Heart right ventricle (tissue), 16 donors: ENCODE measurements at regions of chrX and their contacts with region 1.

Region 1: DNA sequence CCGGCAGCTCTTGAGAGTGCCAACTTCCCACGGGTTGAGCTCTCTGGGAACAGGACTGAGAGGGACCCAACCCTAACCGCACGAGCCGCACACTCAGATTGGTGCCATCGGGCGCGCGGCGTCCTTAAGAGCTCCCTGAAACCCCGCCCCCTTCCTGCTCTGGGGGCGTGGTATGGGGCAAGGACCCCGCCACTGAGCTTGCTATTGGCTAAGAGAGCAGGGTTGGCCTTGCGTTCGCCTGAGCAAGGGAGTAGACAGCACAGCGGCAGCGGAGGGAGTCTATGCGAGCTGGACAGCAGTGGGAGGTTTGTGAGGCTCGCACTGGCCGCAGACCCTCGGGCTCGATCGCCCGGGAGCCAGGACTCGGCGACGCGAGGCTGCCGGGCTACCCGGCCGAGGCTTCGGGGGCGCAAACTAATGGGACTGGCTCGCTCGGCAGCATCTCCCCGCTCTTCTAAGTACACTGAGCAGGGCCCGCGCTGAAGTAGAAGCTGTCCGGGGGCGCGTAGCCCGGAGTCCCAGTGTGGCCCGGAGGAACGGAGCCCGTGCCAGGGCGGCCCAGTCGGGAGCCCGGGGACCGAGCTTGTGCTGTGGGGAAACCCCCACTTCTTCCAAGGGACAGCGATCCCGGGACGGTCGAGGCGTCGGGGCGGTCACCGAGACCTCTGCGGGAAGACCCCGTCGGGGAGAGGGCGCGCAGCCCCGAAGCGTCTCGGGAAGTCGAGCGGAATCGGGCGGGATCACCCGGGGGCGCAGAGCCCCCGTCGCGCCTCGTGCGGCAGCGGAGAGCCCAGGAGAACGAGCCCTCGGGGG is at the start of gene EFNB1:
- DNase-seq: peak; percentile 90 to 92
- ATAC-seq: peak; percentile 90 to 97 (median 93)
- H3K4me3 ChIP-seq: peak within 1 kb of the TSS; percentile 47 to 90 (median 84)
- H3K27ac ChIP-seq: peak within 1 kb of the TSS; percentile 50 to 90 (median 87)
- H3K4me1 ChIP-seq: peaks cover 0 to 28% (median 10%) of the 10 kb centered on the region in 9 donors
- H3K27me3 ChIP-seq: peaks cover 0 to 63% (median 0%) of the 10 kb centered on the region in 7 donors
- CTCF ChIP-seq: no peak
- total RNA-seq, gene EFNB1: 10.8 to 45.1 (median 16.5) TPM

Region 2: GRCh38 chrX:68936608-68937007 is 107.7 kb after region 1 on chrX:
- intact Hi-C with region 1: loop called in 3 of 10 experiments (anchors 2 to 5 kb)
- DNase-seq: no peak
- ATAC-seq: peak in 3 of 8 donors; percentile 32 to 53 (median 39)
- H3K4me3 ChIP-seq: no peak overlapping the region
- H3K27ac ChIP-seq: peak overlapping the region in 4 of 10 donors; percentile 26 to 49 (median 42)
- H3K4me1 ChIP-seq: peaks cover 0 to 57% (median 22%) of the 10 kb centered on the region in 9 donors
- H3K27me3 ChIP-seq: no peaks in the 10 kb centered on the region
- CTCF ChIP-seq: no peak

Region 3: GRCh38 chrX:69027181-69028005 is 198.4 kb after region 1 on chrX:
- intact Hi-C with region 1: loop called in 1 of 10 experiments (anchors 10 kb)
- DNase-seq: no peak
- ATAC-seq: peak in 3 of 8 donors; percentile 13 to 53 (median 29)
- H3K4me3 ChIP-seq: no peak overlapping the region
- H3K27ac ChIP-seq: peak overlapping the region in 1 of 10 donors; percentile 29
- H3K4me1 ChIP-seq: peaks cover 0 to 42% (median 19%) of the 10 kb centered on the region in 9 donors
- H3K27me3 ChIP-seq: peaks cover 0 to 20% (median 0%) of the 10 kb centered on the region in 7 donors
- CTCF ChIP-seq: no peak

Region 4: GRCh38 chrX:69207216-69207615 is 378.3 kb after region 1 on chrX:
- intact Hi-C with region 1: loop called in 1 of 10 experiments (anchors 5 kb)
- DNase-seq: no peak
- ATAC-seq: no peak
- H3K4me3 ChIP-seq: no peak overlapping the region
- H3K27ac ChIP-seq: no peak overlapping the region
- H3K4me1 ChIP-seq: peaks cover 0 to 9% (median 0%) of the 10 kb centered on the region in 9 donors
- H3K27me3 ChIP-seq: peaks cover 0 to 10% (median 0%) of the 10 kb centered on the region in 7 donors
- CTCF ChIP-seq: no peak

Region 5: DNA sequence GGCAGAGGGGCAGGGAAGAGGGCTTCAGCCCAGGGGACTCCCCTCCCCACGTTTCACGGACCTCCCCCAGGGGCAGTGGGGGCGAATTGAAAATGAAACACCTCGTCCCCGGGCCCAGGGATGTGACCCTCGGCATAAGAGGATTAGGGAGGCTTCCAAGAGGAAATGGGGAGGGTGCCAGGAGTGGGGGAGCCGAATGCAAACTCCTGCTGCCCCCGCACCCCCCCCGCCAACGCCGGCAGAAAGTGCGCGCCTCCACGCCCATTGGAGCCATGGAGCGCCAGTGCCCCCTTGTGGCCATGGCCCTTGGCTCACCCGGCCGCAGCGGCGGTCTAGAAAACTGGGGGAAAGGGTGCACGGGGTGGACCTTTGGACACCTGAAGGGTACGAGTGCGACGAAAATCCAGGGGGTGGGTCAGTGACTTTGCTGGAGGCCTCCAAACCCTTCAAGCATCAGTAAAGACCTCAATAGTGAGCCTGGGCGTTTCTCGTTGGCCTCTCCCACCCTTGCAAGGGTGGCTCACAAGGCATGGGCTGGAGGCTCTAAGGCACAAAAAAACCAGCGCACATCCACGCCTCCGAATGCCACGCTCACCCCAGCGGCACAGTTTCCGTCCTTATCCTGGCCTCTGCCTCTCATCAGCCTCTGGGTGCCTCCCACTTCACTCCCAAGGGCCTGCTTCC is 457.1 kb after region 1 on chrX:
- intact Hi-C with region 1: loop called in 9 of 10 experiments (anchors 2 to 5 kb)
- DNase-seq: peak; percentile 49 to 71
- ATAC-seq: peak; percentile 72 to 89 (median 86)
- H3K4me3 ChIP-seq: peak overlapping the region; percentile 4 to 55 (median 45)
- H3K27ac ChIP-seq: peak overlapping the region in 3 of 10 donors; percentile 30 to 55 (median 31)
- H3K4me1 ChIP-seq: peaks cover 0 to 10% (median 5%) of the 10 kb centered on the region in 9 donors
- H3K27me3 ChIP-seq: peaks cover 0 to 36% (median 0%) of the 10 kb centered on the region in 7 donors
- CTCF ChIP-seq: peak; percentile 60 to 92 (median 83)